ENCODE measurements at regions of chr16 and their contacts with region 1.

Region 1: GRCh38 chr16:2009789-2010510 is at the start of gene ZNF598:
- DNase-seq: peak; percentile 98
- CTCF ChIP-seq: no peak

Region 2: GRCh38 chr16:2142942-2143877 is 133.3 kb after region 1 on chr16:
- in situ Hi-C with region 1: loop called (anchors 5 kb)
- DNase-seq: no peak
- CTCF ChIP-seq: no peak

Region 3: DNA sequence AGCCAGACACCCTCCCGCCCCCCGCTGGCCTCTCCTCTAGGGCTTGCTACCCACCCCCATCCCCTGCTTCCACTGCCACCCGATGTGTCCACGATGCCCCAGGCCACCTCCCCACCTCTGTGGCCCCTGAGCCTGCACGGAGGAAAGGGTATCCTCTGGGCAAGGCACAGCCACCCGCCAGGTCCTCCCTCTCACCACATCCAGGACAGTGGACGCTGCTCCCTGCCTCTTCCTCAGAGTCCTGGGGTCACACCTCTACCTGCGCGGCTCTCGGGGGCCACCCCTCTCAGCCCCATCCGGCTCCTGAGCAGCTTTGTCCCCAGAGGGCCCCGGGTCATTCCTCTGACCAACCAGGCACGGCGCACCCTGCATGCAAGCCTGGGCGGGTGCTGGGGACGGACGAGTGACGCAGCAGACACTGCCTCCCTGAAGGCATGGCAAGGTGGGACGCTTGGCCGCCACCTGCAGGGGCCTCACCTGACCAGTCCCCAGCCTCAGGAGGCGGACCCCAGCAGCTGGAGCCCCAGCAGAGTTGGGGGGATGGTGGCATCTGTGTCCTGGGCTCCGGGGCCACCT is 926.6 kb after region 1 on chr16:
- in situ Hi-C with region 1: no loop called
- DNase-seq: no peak
- CTCF ChIP-seq: no peak